Spleen (tissue), 13 donors: ENCODE measurements at regions of chr1 and their contacts with region 1.

Region 1: GRCh38 chr1:222009105-222009730 is 267.3 kb upstream of the DUSP10 start:
- DNase-seq: no peak
- H3K4me3 ChIP-seq: no peak overlapping the region
- H3K27ac ChIP-seq: no peak overlapping the region
- H3K4me1 ChIP-seq: peaks cover 0 to 6% (median 0%) of the 10 kb centered on the region in 6 donors
- H3K27me3 ChIP-seq: no peaks in the 10 kb centered on the region
- CTCF ChIP-seq: peak in 8 of 11 experiments; percentile 20 to 48 (median 32)
- POLR2A ChIP-seq: no peak

Region 2: GRCh38 chr1:221487781-221488524 is 521.3 kb before region 1 on chr1:
- intact Hi-C with region 1: loop called (anchors 10 kb)
- DNase-seq: no peak
- H3K4me3 ChIP-seq: no peak overlapping the region
- H3K27ac ChIP-seq: no peak overlapping the region
- H3K4me1 ChIP-seq: no peaks in the 10 kb centered on the region
- H3K27me3 ChIP-seq: no peaks in the 10 kb centered on the region
- CTCF ChIP-seq: no peak
- POLR2A ChIP-seq: no peak

Region 3: DNA sequence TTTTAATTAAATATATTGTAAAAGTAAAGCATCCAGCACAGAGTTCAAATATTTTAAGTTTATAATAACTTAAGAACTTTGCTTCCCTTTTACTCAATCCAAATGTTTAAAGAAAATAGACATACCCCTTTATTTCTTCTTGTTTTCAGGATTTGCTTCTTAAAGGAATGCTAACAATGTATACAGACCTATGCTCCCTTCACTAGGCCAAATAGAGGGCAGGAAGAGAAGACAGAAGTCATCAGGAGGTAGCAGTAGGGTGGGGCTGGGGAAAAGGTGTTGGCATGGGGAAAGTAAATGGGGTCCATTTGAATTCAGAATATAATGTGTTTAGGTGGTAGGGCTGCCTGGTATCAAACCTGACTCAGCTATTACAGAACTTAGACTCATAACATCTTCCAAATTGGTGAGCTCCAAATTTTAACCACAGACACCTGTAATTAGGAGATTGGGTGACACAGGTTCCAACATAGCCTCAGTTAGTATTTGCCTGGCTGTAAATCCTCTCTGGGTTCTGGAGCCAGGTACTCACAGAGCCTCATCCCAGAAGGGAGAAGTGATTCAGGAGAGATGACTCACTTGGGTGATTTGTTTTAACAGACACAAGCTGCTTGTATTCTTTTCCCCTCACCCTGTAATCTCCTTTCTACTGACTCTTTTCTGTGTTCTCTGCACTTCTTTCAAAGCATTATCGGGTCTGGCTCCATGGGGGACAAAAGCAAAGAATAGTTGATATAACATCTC is 207.3 kb before region 1 on chr1:
- intact Hi-C with region 1: no loop called
- DNase-seq: no peak
- H3K4me3 ChIP-seq: no peak overlapping the region
- H3K27ac ChIP-seq: no peak overlapping the region
- H3K4me1 ChIP-seq: peaks cover 0 to 5% (median 0%) of the 10 kb centered on the region in 6 donors
- H3K27me3 ChIP-seq: no peaks in the 10 kb centered on the region
- CTCF ChIP-seq: no peak
- POLR2A ChIP-seq: no peak

Region 4: DNA sequence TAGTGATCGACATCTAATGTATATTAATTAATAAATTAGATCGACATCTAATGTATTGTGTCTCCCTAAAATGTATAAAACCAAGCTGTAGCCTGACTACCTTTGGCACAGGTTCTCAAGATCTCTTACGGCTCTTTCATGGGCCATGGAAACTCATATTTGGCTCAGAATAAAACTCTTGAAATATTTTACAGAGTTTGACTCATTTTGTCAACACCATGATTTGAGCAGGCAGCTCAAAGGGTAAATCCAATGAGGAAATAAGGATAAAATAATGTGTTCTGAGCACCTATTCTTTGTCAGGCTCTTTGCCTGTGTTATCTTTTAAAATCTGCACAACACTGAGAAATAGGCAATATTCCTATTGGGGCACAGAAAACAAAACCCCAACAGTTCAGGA is 44.0 kb before region 1 on chr1:
- intact Hi-C with region 1: no loop called
- DNase-seq: no peak
- H3K4me3 ChIP-seq: no peak overlapping the region
- H3K27ac ChIP-seq: no peak overlapping the region
- H3K4me1 ChIP-seq: peaks cover 0 to 8% (median 0%) of the 10 kb centered on the region in 6 donors
- H3K27me3 ChIP-seq: no peaks in the 10 kb centered on the region
- CTCF ChIP-seq: no peak
- POLR2A ChIP-seq: no peak